H1 (cell line): ENCODE measurements at regions of chr1 and their contacts with region 1.

Region 1: GRCh38 chr1:6033986-6034749 is 11.5 kb upstream of the KCNAB2 start:
- DNase-seq: peak in 1 of 2 experiments; percentile 95
- H3K4me3 ChIP-seq: peak overlapping the region in 2 of 4 experiments; percentile 6 to 44; a peak in 3 of 8 replicates
- H3K27ac ChIP-seq: no peak overlapping the region
- H3K4me1 ChIP-seq: peaks cover 0 to 13% (median 7%) of the 10 kb centered on the region in 4 experiments; a peak in 5 of 7 replicates
- H3K27me3 ChIP-seq: peaks cover 0 to 5% (median 2%) of the 10 kb centered on the region in 4 experiments; a peak in 4 of 7 replicates
- CTCF ChIP-seq: peak in 2 of 3 experiments; percentile 73 to 77; a peak in 3 of 4 replicates
- EP300 ChIP-seq: no peak
- POLR2A ChIP-seq: no peak
- RAD21 ChIP-seq: peak; percentile 16 to 30; a peak in 1 of 4 replicates

Region 2: DNA sequence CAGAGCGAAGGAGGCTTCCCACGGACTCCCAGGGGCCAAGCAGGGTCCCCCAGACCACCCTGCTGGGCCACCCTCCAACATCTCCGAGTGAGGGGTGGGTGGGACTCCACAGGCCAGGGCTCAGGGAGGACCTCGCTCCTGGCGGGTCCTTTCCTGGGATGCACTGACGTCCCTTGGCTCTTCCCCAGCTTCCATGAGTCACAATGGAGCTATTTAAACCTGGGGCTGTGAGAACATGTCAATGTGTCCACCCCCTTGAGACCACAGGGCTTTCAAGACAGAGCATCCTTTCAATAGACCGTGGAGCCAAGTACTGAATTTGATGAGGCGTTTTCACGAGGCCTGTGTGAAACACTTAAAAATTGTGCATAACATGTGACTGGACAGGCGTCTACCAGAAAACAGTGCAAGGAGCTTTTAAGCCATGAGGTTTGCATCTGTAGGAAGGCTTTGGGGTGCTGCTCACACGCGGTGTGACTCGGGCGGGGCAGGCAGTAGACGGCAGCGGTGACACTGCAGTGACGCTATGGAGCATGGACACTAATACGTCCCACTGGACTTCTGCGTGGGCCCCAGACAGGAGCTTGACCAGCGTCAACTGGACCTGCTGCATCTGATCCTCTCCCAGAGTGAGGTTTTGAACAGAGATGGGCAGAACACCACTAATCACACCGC is 17.8 kb before region 1 on chr1:
- CTCF ChIA-PET with region 1: interaction called, 15 read pairs
- POLR2A ChIA-PET with region 1: no interaction called
- DNase-seq: no peak
- H3K4me3 ChIP-seq: no peak overlapping the region
- H3K27ac ChIP-seq: no peak overlapping the region
- H3K4me1 ChIP-seq: no peaks in the 10 kb centered on the region
- H3K27me3 ChIP-seq: no peaks in the 10 kb centered on the region
- CTCF ChIP-seq: no peak
- EP300 ChIP-seq: no peak
- POLR2A ChIP-seq: no peak
- RAD21 ChIP-seq: no peak

Region 3: DNA sequence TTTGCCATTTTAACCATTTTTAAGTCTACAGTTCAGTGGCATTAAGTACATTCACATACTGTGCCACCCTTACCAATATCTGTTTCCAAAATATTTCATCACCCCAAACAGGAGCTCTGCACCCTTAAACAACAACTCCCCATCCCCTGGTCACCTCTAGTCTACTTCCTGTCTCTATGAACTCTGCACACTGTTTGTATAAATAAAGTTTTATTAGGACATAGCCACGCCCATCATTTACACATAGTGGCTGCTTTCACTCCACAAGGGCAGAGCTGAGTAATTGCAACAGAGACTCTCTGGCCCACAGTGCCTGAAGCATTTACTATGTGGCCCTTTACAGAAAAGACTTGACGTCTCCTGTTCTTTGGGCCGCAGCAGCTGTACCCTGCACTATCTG is 41.6 kb after region 1 on chr1:
- CTCF ChIA-PET with region 1: interaction called, 14 read pairs
- POLR2A ChIA-PET with region 1: no interaction called
- DNase-seq: no peak
- H3K4me3 ChIP-seq: no peak overlapping the region
- H3K27ac ChIP-seq: no peak overlapping the region
- H3K4me1 ChIP-seq: peaks cover 0 to 4% (median 1%) of the 10 kb centered on the region in 4 experiments; a peak in 4 of 7 replicates
- H3K27me3 ChIP-seq: 0 out of 7 replicates have a peak, but pooled peaks cover 0 to 2% (median 0%) of the 10 kb centered on the region in 4 experiments
- CTCF ChIP-seq: no peak
- EP300 ChIP-seq: no peak
- POLR2A ChIP-seq: no peak
- RAD21 ChIP-seq: no peak

Region 4: GRCh38 chr1:6154525-6155319 is 120.6 kb after region 1 on chr1:
- CTCF ChIA-PET with region 1: interaction called, 12 read pairs
- POLR2A ChIA-PET with region 1: no interaction called
- DNase-seq: no peak
- H3K4me3 ChIP-seq: no peak overlapping the region
- H3K27ac ChIP-seq: no peak overlapping the region
- H3K4me1 ChIP-seq: peaks cover 0 to 10% (median 0%) of the 10 kb centered on the region in 4 experiments; a peak in 1 of 7 replicates
- H3K27me3 ChIP-seq: peaks cover 0 to 2% (median 0%) of the 10 kb centered on the region in 4 experiments; a peak in 3 of 7 replicates
- CTCF ChIP-seq: peak in 1 of 3 experiments; percentile 9; a peak in 1 of 4 replicates
- EP300 ChIP-seq: no peak
- POLR2A ChIP-seq: no peak
- RAD21 ChIP-seq: no peak